Activated CD4-positive, alpha-beta T cell treated with anti-CD3 and anti-CD28 coated beads, Interleukin-2, amount 10 ng/mL, durations not matched to agents 24 days and 14 days (primary cell): ENCODE measurements at regions of chr1 and their contacts with region 1.

Region 1: DNA sequence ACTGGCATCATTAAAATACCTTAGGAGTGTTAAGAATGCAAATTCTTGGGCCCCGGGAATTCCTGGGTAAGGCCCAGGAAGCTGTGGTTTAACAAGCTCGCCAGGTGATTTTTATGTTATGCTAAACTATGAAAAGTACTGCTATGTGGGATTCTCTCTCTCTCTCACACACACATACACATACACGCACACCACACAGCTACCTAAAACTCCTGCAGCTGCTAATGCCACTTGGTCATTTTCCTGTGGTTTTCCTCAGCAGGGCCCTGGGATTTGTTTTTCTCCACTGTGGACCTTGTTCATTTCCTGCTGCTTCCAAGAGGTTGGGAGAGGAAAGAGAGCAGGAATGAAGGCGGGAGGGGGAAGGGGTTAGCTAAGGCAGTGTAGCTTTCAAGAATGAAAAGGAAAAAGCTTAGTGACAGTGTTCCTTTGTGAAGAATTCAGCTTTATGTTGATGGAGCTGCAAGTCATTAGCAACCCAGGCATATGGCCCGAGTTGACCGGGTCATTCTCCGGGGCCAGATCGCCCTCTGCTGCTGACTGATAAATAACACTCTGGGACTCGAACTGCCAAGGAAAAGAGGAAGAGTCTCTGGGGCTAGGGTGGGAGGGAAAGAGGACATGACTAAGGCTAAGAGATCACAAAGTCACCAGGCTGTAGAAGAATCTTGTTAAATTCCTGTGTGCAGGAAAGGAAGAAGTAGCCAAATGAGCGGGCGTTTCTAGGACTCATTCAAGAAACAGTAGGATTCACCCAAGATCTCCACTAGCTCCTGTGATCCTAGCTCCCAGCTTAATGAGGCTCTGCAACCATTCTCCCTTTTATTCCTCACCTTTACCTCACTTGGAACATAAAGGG is 30.5 kb upstream of the LRIG2 start:
- DNase-seq: peak; percentile 65
- H3K4me3 Mint-ChIP-seq: no peak overlapping the region
- H3K27ac Mint-ChIP-seq: no peak overlapping the region
- H3K4me1 Mint-ChIP-seq: peaks cover 32% of the 10 kb centered on the region
- H3K27me3 Mint-ChIP-seq: no peaks in the 10 kb centered on the region

Region 2: GRCh38 chr1:112803906-112804762 is 238.4 kb before region 1 on chr1:
- intact Hi-C with region 1: loop called (anchors 10 kb)
- DNase-seq: peak; percentile 86
- H3K4me3 Mint-ChIP-seq: no peak overlapping the region
- H3K27ac Mint-ChIP-seq: no peak overlapping the region
- H3K4me1 Mint-ChIP-seq: peaks cover 2% of the 10 kb centered on the region
- H3K27me3 Mint-ChIP-seq: peaks cover 11% of the 10 kb centered on the region

Region 3: GRCh38 chr1:112881742-112882127 is 160.8 kb before region 1 on chr1:
- intact Hi-C with region 1: loop called (anchors 2 kb)
- DNase-seq: no peak
- H3K4me3 Mint-ChIP-seq: no peak overlapping the region
- H3K27ac Mint-ChIP-seq: no peak overlapping the region
- H3K4me1 Mint-ChIP-seq: peaks cover 3% of the 10 kb centered on the region
- H3K27me3 Mint-ChIP-seq: peaks cover 21% of the 10 kb centered on the region

Region 4: DNA sequence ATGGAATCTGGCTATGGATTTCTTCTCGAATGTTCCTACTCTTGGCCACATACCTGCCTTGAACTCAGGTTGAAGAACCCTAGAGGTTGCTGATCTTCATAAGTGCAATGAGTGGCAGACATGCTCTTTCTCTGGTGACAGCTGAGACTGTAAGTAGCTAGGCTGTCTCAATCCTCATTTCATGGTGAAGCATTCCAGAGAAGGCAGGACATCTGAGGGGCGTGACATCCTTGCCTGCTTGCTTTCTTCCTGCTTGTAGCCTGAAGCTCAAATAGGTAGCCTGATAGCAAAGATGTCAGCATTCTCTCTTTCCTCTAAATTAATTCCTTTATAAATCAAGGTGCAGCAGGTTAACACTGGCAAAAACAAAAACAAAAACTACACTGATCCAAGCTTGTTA is 233.2 kb after region 1 on chr1:
- intact Hi-C with region 1: no loop called
- DNase-seq: no peak
- H3K4me3 Mint-ChIP-seq: no peak overlapping the region
- H3K27ac Mint-ChIP-seq: no peak overlapping the region
- H3K4me1 Mint-ChIP-seq: no peaks in the 10 kb centered on the region
- H3K27me3 Mint-ChIP-seq: peaks cover 14% of the 10 kb centered on the region